Caco-2 (cell line): ENCODE measurements at regions of chr7 and their contacts with region 1.

Region 1: DNA sequence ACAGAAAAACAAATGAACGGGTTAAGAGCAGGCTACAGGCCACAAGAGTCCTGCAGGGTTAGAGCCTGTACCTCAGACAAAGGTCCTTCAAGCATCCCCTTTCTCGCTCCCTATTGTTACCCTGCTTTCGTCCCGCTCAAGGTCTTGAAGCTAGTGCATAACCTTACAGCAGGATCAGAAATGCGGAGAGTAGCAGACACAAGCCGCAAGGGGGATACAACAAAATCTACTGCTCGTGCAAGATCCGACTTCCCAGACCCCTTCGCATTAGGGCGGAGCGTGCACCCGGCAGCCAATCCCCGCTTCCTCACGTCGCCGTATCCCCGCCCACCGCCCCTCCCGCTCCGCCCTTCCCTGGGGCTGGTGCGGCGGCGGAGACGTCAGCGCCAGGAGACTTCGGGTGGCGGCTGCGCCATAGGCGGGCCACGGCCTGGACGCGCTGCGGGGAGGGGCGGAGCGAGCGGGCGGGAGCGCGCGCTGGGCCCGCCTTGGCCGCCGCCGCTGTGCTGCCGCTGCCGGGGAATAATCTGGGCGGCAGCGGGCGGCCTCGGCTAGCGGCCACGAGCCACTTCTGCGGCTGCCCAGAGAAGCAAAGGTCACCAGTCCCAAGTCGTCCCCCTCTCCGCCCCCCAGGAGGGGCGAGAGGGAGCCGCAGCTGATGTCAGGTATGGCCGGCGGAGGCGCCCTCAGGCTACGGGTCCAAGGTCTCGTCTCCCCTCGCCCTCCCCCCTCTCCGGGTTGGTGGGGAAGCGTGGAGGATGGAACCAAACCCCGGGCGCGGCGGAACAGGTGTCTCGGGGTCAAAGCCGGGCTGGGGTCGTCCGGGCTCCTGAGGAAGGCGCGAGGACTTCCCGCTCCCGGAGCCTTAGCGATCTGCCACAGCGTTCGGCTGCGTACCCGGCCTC is at the start of gene C1GALT1:
- DNase-seq: peak; percentile 98
- H3K4me3 ChIP-seq: peak within 1 kb of the TSS; percentile 65
- H3K4me3 Mint-ChIP-seq: peak within 1 kb of the TSS; percentile 91
- H3K27ac Mint-ChIP-seq: peak within 1 kb of the TSS; percentile 92
- H3K4me1 ChIP-seq: peaks cover 16% of the 10 kb centered on the region
- H3K4me1 Mint-ChIP-seq: peaks cover 16% of the 10 kb centered on the region
- H3K27me3 ChIP-seq: no peaks in the 10 kb centered on the region
- H3K27me3 Mint-ChIP-seq: no peaks in the 10 kb centered on the region
- CTCF ChIP-seq: peak; percentile 47 to 52
- total RNA-seq, gene C1GALT1: 49.8 and 52.2 TPM in 2 replicates

Region 2: GRCh38 chr7:7077945-7078344 is 104.5 kb before region 1 on chr7:
- CTCF ChIA-PET with region 1: no interaction called
- POLR2A ChIA-PET with region 1: no interaction called
- intact Hi-C with region 1: no loop called
- DNase-seq: no peak
- H3K4me3 ChIP-seq: no peak overlapping the region
- H3K4me3 Mint-ChIP-seq: no peak overlapping the region
- H3K27ac Mint-ChIP-seq: no peak overlapping the region
- H3K4me1 ChIP-seq: no peaks in the 10 kb centered on the region
- H3K4me1 Mint-ChIP-seq: peaks cover 4% of the 10 kb centered on the region
- H3K27me3 ChIP-seq: no peaks in the 10 kb centered on the region
- H3K27me3 Mint-ChIP-seq: no peaks in the 10 kb centered on the region
- CTCF ChIP-seq: no peak

Region 3: DNA sequence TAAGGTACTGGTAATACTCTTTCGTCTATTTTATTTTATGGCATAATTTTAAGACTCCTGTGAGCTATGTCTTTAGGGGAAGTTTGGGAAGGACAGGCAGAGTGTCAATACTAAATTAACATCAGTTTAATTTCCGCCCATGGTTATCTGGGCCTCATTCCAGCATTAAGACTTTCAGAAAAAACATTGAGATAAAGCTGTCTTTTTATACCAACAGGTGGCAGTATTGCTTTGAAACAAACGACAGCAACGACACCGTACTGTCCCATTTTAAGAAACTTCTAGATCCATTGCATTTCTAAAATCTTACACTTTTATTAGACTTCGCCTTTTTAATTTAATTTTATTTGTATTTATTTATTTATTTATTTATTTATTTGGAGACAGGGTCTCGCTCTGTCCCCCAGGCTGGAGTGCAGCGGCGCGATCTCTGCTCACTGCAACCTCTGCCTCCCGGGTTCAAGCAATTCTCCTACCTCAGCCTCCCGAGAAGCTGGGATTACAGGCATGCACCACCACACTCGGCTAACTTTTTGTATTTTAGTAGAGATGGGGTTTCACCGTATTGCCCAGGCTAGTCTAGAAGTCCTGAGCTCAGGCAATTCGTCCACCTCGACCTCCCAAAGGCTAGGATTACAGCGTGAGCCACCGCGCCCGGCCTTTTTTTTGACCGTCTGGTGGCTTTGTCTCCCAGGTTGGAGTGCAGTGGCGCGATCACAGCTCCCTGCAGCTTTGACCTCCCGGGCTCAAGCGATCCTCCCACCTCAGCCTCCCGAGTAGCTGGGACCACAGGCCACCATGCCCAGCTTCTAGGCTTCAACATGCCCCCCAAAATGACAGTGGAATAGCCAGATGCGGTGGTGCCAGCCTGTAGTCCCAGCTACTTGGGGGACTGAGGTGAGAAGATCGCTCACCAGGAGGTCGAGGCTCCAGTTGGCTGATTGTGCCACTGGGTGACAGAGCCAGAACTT is 78.8 kb before region 1 on chr7:
- CTCF ChIA-PET with region 1: interaction called, 7 read pairs
- POLR2A ChIA-PET with region 1: no interaction called
- intact Hi-C with region 1: loop called (anchors 1 kb)
- DNase-seq: peak in 1 of 2 experiments; percentile 44
- H3K4me3 ChIP-seq: no peak overlapping the region
- H3K4me3 Mint-ChIP-seq: no peak overlapping the region
- H3K27ac Mint-ChIP-seq: peak overlapping the region; percentile 28
- H3K4me1 ChIP-seq: peaks cover 23% of the 10 kb centered on the region
- H3K4me1 Mint-ChIP-seq: peaks cover 34% of the 10 kb centered on the region
- H3K27me3 ChIP-seq: no peaks in the 10 kb centered on the region
- H3K27me3 Mint-ChIP-seq: no peaks in the 10 kb centered on the region
- CTCF ChIP-seq: peak; percentile 52 to 64

Region 4: GRCh38 chr7:7157177-7157886 is 25.1 kb before region 1 on chr7:
- CTCF ChIA-PET with region 1: no interaction called
- POLR2A ChIA-PET with region 1: interaction called, 3 read pairs
- intact Hi-C with region 1: loop called (anchors 2 kb)
- DNase-seq: no peak
- H3K4me3 ChIP-seq: no peak overlapping the region
- H3K4me3 Mint-ChIP-seq: no peak overlapping the region
- H3K27ac Mint-ChIP-seq: no peak overlapping the region
- H3K4me1 ChIP-seq: peaks cover 11% of the 10 kb centered on the region
- H3K4me1 Mint-ChIP-seq: peaks cover 29% of the 10 kb centered on the region
- H3K27me3 ChIP-seq: no peaks in the 10 kb centered on the region
- H3K27me3 Mint-ChIP-seq: no peaks in the 10 kb centered on the region
- CTCF ChIP-seq: no peak

Region 5: GRCh38 chr7:7265081-7265686 is 82.8 kb after region 1 on chr7:
- CTCF ChIA-PET with region 1: no interaction called
- POLR2A ChIA-PET with region 1: no interaction called
- intact Hi-C with region 1: loop called (anchors 1 kb)
- DNase-seq: no peak
- H3K4me3 ChIP-seq: no peak overlapping the region
- H3K4me3 Mint-ChIP-seq: no peak overlapping the region
- H3K27ac Mint-ChIP-seq: peak overlapping the region; percentile 97
- H3K4me1 ChIP-seq: peaks cover 58% of the 10 kb centered on the region
- H3K4me1 Mint-ChIP-seq: peaks cover 41% of the 10 kb centered on the region
- H3K27me3 ChIP-seq: no peaks in the 10 kb centered on the region; the same call in 1 of the 2 replicates
- H3K27me3 Mint-ChIP-seq: no peaks in the 10 kb centered on the region
- CTCF ChIP-seq: no peak

Region 6: GRCh38 chr7:7408001-7408770 is 225.8 kb after region 1 on chr7:
- CTCF ChIA-PET with region 1: no interaction called
- POLR2A ChIA-PET with region 1: no interaction called
- intact Hi-C with region 1: loop called (anchors 5 kb)
- DNase-seq: peak in 1 of 2 experiments; percentile 37
- H3K4me3 ChIP-seq: no peak overlapping the region
- H3K4me3 Mint-ChIP-seq: no peak overlapping the region
- H3K27ac Mint-ChIP-seq: peak overlapping the region; percentile 9
- H3K4me1 ChIP-seq: 0 out of 2 replicates have a peak, but pooled peaks cover 9% of the 10 kb centered on the region
- H3K4me1 Mint-ChIP-seq: peaks cover 7% of the 10 kb centered on the region
- H3K27me3 ChIP-seq: no peaks in the 10 kb centered on the region
- H3K27me3 Mint-ChIP-seq: no peaks in the 10 kb centered on the region
- CTCF ChIP-seq: no peak

Region 7: DNA sequence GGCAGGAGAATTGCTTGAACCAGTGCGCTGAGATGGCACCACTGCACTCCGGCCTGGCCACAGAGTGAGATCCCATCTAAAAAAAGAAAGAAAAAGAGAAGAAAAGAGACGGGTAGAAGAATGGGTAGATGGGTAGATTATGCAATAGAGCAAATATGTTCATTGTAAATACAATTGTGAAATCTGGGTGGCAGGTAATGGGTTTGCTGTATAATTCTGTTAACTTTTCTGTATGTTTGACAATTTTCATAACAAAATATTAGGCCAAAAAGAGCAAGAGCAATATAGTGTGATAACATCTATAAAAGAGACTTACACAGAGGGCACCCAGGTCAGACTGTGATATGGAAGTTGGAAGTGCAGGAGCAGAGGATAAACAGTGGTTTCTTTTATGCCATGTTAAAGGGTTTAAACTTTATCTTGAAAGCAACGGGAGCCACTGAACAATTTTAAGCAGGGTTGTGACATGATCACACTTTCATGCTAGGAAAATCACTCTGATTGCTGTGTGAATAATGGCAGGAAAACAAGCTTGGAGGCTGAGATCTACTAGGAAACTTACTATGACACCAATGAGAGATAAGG is 359.9 kb after region 1 on chr7:
- CTCF ChIA-PET with region 1: no interaction called
- POLR2A ChIA-PET with region 1: no interaction called
- intact Hi-C with region 1: loop called (anchors 2 kb)
- DNase-seq: no peak
- H3K4me3 ChIP-seq: no peak overlapping the region
- H3K4me3 Mint-ChIP-seq: no peak overlapping the region
- H3K27ac Mint-ChIP-seq: no peak overlapping the region
- H3K4me1 ChIP-seq: peaks cover 7% of the 10 kb centered on the region
- H3K4me1 Mint-ChIP-seq: peaks cover 18% of the 10 kb centered on the region
- H3K27me3 ChIP-seq: no peaks in the 10 kb centered on the region
- H3K27me3 Mint-ChIP-seq: no peaks in the 10 kb centered on the region
- CTCF ChIP-seq: no peak